ENCODE measurements at regions of chrX and their contacts with region 1.

Region 1: DNA sequence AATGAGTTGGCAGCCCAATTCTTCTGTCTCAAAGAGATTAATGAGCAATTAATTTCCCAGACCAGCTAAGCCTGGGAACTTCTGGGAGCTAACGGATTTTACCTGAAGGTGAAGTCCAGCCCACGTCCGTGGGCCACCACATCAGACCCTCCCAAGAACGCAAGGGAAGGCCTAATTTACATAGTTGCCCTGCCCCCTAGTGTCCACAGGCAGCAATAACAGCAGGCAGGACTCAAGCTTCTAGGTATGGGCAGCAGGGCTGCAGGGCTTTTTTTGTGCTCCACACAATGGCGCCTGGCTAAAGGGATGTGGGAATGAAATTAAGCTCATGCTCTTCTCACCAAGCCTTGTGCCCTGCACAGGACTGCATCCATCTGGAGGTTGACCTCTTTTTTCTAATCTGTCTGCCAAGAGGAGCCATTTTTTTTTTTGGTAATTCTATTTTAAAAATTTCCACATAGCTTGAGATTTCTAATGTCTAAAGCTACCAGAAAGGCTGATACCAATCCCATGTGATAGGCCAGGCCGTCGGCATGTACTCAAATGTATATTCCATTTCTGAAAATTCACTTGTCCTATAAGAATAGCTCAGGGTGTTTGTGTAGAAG is 111.9 kb upstream of the TMEM164 start:
- DNase-seq: peak; percentile 58
- ATAC-seq: peak; percentile 49
- H3K4me3 ChIP-seq: no peak overlapping the region
- H3K4me3 Mint-ChIP-seq: no peak overlapping the region
- H3K27ac ChIP-seq: no peak overlapping the region
- H3K27ac Mint-ChIP-seq: peak overlapping the region; percentile 41
- H3K4me1 ChIP-seq: peaks cover 25 to 34% of the 10 kb centered on the region in 2 donors
- H3K4me1 Mint-ChIP-seq: peaks cover 32% of the 10 kb centered on the region
- H3K27me3 ChIP-seq: no peaks in the 10 kb centered on the region
- H3K27me3 Mint-ChIP-seq: no peaks in the 10 kb centered on the region
- CTCF ChIP-seq: peak; percentile 77

Region 2: DNA sequence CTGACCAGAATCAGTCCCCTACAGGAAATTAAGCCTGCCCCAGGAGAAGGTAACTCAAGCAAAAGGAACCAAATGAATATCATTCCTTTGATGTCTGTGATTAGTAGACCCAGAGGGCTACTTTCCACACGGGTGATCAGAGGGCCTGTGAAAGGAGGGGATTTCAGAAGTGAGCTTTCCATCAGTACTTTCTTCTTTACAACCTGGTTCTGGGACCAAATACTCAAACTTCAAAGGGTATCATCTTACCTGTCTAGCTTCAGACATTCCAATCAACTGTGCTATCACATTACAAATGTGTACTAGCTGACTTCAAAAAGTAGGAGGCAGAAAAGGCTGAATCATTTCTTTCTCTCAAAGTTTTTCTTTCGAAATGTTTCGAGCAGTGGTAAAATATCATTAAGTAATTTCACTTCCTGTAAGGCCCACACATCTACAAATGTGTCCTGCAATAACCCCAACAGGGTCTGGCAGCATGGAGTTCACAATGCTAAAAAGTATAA is 181.8 kb before region 1 on chrX:
- CTCF ChIA-PET with region 1: interaction called, 115 read pairs
- POLR2A ChIA-PET with region 1: no interaction called
- intact Hi-C with region 1: loop called (anchors 2 kb)
- DNase-seq: peak; percentile 47
- ATAC-seq: peak; percentile 59
- H3K4me3 ChIP-seq: peak overlapping the region in 1 of 5 experiments; percentile 4
- H3K4me3 Mint-ChIP-seq: peak overlapping the region; percentile 70
- H3K27ac ChIP-seq: peak overlapping the region; percentile 54 to 61
- H3K27ac Mint-ChIP-seq: peak overlapping the region; percentile 72
- H3K4me1 ChIP-seq: peaks cover 25 to 30% of the 10 kb centered on the region in 2 donors
- H3K4me1 Mint-ChIP-seq: peaks cover 47% of the 10 kb centered on the region
- H3K27me3 ChIP-seq: no peaks in the 10 kb centered on the region
- H3K27me3 Mint-ChIP-seq: no peaks in the 10 kb centered on the region
- CTCF ChIP-seq: no peak

Region 3: GRCh38 chrX:109880629-109881028 is 10.4 kb before region 1 on chrX:
- CTCF ChIA-PET with region 1: interaction called, 19 read pairs
- POLR2A ChIA-PET with region 1: no interaction called
- intact Hi-C with region 1: no loop called
- DNase-seq: peak; percentile 19
- ATAC-seq: peak; percentile 43
- H3K4me3 ChIP-seq: no peak overlapping the region
- H3K4me3 Mint-ChIP-seq: no peak overlapping the region
- H3K27ac ChIP-seq: no peak overlapping the region
- H3K27ac Mint-ChIP-seq: no peak overlapping the region
- H3K4me1 ChIP-seq: no peaks in the 10 kb centered on the region
- H3K4me1 Mint-ChIP-seq: peaks cover 12% of the 10 kb centered on the region
- H3K27me3 ChIP-seq: no peaks in the 10 kb centered on the region
- H3K27me3 Mint-ChIP-seq: no peaks in the 10 kb centered on the region
- CTCF ChIP-seq: no peak

Region 4: DNA sequence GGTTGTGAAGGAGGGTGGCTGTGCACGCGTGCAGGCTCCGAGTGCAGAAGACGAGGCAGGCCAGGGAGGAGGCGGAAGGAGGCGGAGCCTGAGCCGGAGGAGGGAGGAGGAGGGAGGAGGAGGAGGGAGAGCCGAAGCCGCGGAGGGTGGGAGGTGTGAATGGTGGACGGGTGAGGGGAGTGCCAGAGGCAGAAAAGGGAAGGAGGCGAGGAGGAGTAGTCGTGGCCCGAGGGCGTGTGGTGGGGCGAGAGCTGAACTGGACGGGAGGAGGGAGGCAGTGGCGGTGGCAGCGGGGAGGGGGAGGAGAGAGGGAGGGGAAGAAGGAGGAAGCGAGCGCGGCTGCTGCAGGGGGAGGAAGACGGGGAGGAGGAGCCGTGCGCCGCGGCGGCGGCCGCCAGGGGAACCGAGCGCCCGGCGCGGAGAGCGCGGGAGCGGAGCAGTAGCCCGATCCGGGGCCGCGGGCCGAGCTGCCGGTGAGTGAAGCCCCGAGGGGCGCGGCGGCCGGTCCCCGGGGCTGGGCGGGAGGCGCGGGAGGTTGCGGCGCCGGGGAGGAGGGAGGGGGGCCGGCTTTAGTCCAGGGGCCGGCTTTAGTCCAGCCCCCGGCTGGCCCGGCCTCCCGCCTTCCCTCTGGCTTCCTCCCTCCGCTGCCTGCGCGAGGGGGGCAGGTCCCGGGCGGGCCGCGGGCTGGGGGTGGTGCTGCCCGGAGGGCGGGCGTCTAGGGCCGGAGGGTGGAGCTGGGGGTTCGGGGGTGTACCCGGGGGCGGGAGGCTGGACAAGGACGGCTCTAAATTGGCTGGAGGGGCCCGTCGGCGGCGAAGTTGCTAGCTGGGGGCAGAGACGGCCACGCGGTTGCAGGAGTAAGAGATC is 111.5 kb after region 1 on chrX and contains the start of gene TMEM164:
- CTCF ChIA-PET with region 1: interaction called, 4 read pairs
- POLR2A ChIA-PET with region 1: no interaction called
- intact Hi-C with region 1: loop called (anchors 5 kb)
- DNase-seq: peak; percentile 88
- ATAC-seq: peak; percentile 76
- H3K4me3 ChIP-seq: peak within 1 kb of the TSS in 4 of 5 experiments; percentile 57 to 71 (median 65)
- H3K4me3 Mint-ChIP-seq: peak within 1 kb of the TSS; percentile 93
- H3K27ac ChIP-seq: peak within 1 kb of the TSS; percentile 53 to 61
- H3K27ac Mint-ChIP-seq: peak within 1 kb of the TSS; percentile 96
- H3K4me1 ChIP-seq: peaks cover 7 to 15% of the 10 kb centered on the region in 2 donors
- H3K4me1 Mint-ChIP-seq: peaks cover 25% of the 10 kb centered on the region
- H3K27me3 ChIP-seq: no peaks in the 10 kb centered on the region
- H3K27me3 Mint-ChIP-seq: no peaks in the 10 kb centered on the region
- CTCF ChIP-seq: no peak
- total RNA-seq, gene TMEM164: 24.5 and 26.6 TPM in 2 replicates

Measured in B cell (primary cell).